Panc1 (cell line): ENCODE measurements at regions of chr20 and their contacts with region 1.

Region 1: DNA sequence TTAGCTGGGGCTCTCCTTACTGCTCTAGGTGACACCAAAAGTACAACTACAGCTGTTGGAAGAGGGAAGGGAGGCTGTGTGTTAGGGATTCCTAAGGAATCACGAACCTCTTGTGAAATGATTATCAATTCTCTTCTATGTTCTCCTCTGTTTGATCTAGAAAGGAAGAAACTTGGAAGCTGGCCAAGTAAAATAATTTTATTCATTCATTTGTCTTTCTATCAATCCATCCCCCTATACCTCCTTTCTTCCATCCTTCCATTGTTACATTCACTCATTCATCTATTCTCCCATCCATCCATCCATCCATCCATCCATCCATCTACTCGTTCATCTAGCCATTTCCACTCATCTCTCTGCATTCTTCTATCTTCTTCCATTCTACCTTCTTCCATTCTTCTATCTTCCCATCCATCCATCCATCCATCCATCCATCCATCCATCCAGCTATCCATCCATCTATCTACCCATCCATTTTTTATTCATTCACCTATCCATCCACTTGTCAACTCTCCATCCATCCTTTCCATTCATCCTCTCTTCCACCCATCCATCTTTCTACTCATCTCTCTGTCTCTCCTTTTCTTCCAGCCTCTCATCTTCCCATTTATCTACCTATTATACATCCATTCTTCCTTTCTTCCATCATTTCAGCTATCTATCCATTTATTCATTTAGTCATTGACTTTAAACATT is 52.8 kb upstream of the ZNFX1 start:
- DNase-seq: no peak
- ATAC-seq: no peak
- H3K4me3 ChIP-seq: no peak overlapping the region
- H3K27ac ChIP-seq: no peak overlapping the region
- H3K4me1 ChIP-seq: peaks cover 14% of the 10 kb centered on the region
- H3K27me3 ChIP-seq: peaks cover 9% of the 10 kb centered on the region
- CTCF ChIP-seq: no peak

Region 2: DNA sequence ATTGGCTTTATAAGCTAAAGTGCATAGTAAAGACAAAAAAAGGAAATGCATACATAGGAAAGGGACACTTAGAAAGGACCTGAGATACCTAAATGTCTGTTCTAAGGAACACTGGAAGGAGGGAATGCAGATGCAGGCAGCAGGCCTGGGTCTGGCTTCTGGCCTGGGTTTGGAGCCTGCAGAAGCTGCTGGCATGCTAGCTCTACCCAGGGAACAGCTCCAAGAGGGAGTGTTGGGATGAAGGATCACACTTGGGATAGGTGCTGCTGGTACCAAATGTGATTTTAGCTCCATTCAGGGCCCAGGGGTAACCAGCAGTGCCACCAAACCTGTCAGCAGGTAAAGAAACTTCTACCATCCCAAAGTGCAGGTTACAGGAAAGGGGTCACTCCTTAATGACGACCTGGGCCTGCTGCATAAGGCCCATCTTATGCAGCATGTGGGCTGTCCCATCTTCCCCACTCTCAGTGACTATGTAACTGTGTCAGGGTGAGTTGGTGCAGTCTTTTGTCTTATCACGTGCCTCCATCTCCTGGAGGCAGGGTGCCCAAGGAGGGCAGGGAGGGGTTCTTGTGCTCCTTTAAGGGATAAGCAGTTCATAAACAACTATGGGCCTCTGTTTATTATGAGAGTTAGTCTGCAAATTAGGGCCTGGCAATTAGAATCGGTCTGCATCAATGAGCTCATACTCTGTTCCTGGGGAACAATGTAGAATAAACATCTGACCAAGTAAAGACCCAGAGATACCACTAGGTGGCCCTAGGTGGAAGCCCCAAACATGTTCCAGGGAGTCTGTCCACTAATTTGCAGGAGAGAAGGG is 84.6 kb before region 1 on chr20:
- CTCF ChIA-PET with region 1: no interaction called
- POLR2A ChIA-PET with region 1: no interaction called
- in situ Hi-C with region 1: no loop called
- intact Hi-C with region 1: no loop called
- DNase-seq: peak; percentile 42
- ATAC-seq: peak; percentile 81
- H3K4me3 ChIP-seq: no peak overlapping the region
- H3K27ac ChIP-seq: no peak overlapping the region
- H3K4me1 ChIP-seq: no peaks in the 10 kb centered on the region
- H3K27me3 ChIP-seq: no peaks in the 10 kb centered on the region
- CTCF ChIP-seq: peak; percentile 83

Region 3: GRCh38 chr20:49310705-49311104 is 20.0 kb before region 1 on chr20:
- CTCF ChIA-PET with region 1: no interaction called
- POLR2A ChIA-PET with region 1: no interaction called
- in situ Hi-C with region 1: no loop called
- intact Hi-C with region 1: no loop called
- DNase-seq: no peak
- ATAC-seq: no peak
- H3K4me3 ChIP-seq: no peak overlapping the region
- H3K27ac ChIP-seq: no peak overlapping the region
- H3K4me1 ChIP-seq: no peaks in the 10 kb centered on the region
- H3K27me3 ChIP-seq: no peaks in the 10 kb centered on the region; the same call in 1 of the 2 replicates
- CTCF ChIP-seq: no peak

Region 4: GRCh38 chr20:49496553-49497397 is 166.1 kb after region 1 on chr20:
- CTCF ChIA-PET with region 1: interaction called, 14 read pairs
- POLR2A ChIA-PET with region 1: no interaction called
- in situ Hi-C with region 1: no loop called
- intact Hi-C with region 1: no loop called
- DNase-seq: no peak
- ATAC-seq: no peak
- H3K4me3 ChIP-seq: no peak overlapping the region
- H3K27ac ChIP-seq: no peak overlapping the region
- H3K4me1 ChIP-seq: no peaks in the 10 kb centered on the region
- H3K27me3 ChIP-seq: no peaks in the 10 kb centered on the region
- CTCF ChIP-seq: no peak